Endothelial cell of umbilical vein (primary cell): ENCODE measurements at regions of chr3 and their contacts with region 1.

Region 1: DNA sequence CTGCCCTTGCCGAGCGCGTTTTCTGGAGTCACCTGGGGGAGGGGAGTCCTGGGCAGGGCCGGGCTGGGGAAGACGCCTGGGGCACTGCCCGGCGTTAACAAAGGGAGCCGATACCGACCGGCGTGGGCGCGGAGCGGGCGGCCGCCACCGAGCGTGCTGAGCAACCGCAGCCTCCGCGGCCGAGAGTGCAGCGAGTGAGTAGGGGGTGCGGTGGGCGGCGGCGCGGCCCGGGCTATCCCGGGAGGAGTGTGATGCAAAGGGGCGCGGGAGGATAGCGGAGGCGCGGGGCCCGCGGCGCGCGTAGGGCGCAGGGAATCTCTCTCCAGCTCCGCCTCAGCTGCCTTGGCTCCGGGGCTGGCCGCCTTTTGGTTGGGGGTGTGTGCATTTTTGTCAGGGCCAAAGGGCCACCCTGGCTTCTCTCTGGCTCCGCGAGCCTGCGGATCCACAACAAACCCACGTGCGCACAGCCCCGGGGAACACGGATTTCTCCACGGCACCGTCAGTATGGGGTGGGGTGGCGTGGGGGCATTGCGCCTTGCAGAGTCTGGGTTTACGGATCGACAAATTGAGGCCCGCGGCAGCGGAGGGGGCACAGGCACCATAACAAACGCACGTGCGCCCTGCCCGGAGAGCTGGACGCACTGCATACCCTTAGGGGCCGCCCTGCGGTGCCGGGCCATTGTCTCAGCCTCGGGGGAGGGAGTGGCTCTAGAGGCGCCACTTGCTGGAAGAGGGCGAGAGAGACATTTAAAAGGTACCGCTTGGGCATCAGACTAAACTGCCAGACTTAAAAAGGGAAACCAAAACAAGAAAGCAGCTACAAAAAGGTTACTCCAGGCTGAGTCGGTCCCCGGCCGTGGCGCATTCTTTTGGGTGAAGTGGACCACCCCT is 560 bp downstream of the ST6GAL1 start:
- DNase-seq: peak; percentile 81
- H3K4me3 ChIP-seq: peak overlapping the region; percentile 66 to 96 (median 83)
- H3K27ac ChIP-seq: peak overlapping the region; percentile 53
- H3K4me1 ChIP-seq: peaks cover 26% of the 10 kb centered on the region
- H3K27me3 ChIP-seq: no peaks in the 10 kb centered on the region
- CTCF ChIP-seq: peak in 1 of 2 donors; percentile 20
- POLR2A ChIP-seq: no peak

Region 2: DNA sequence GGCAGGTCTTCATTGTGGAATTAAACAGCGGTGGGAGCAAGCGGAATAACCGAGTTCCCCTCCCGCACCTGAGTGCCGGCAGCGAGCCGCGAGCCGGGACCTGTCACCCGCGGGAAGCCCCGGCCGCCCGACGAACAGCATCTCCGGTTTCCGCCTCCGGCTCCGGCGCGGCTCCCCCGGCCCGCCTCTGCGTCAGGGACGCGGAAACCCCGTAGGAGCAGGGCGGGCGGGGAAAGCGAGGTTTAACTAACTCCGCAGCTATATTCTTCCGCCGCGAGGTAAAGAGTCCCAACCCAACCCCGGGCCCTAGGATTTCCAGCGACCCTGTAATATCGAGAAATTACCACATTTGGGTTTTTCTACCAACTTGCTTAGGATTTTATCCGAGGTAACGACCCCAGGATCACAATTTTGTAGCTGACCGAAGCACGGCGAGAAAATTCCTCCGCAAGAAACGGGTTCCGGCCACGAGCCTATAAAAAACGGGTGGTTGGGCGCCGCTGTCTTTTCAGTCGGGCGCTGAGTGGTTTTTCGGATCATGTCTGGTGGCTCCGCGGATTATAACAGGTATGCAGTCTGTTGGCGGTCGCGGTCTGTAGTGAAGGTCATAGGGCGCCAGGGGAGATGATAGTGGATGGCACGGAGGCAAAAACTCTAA is 147.7 kb before region 1 on chr3 and contains the start of gene EIF4A2:
- CTCF ChIA-PET with region 1: no interaction called
- POLR2A ChIA-PET with region 1: interaction called, 6 read pairs
- dilution Hi-C with region 1: no loop called
- intact Hi-C with region 1: loop called (anchors 5 kb)
- DNase-seq: peak; percentile 86
- H3K4me3 ChIP-seq: peak within 1 kb of the TSS; percentile 38 to 85 (median 72)
- H3K27ac ChIP-seq: peak within 1 kb of the TSS; percentile 93
- H3K4me1 ChIP-seq: peaks cover 26% of the 10 kb centered on the region
- H3K27me3 ChIP-seq: no peaks in the 10 kb centered on the region
- CTCF ChIP-seq: no peak
- POLR2A ChIP-seq: peak; percentile 99
- total RNA-seq, gene EIF4A2: 260 and 282 TPM in 2 replicates

Region 3: DNA sequence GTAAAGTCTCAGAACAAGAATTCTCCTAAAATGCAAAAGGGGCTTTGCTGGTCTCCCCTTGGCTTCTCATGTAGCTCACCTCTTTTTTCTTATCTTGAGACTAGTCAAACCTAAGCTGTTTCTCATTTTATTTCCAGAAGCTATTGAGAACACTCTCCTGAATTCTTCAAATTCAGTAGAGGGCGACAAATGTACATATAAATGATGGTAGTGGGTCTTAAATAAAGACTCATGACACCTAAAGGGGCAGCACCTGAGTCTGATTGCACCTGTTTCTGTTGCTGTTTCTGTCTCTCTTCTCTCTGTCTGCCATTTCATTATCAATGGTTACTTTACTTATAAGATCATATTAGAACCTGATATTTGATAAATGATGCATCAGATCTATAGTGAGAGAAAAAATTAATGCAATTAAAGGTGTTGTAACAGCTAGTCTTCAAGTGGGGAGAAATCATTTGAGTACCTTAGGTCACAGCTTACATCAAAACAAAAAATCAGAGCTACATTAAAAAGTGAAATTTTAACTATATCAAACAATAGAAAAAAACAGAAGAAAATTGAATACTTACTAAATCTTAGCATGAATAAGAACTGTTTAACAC is 81.4 kb before region 1 on chr3:
- CTCF ChIA-PET with region 1: interaction called, 102 read pairs
- POLR2A ChIA-PET with region 1: interaction called, 5 read pairs
- dilution Hi-C with region 1: no loop called
- intact Hi-C with region 1: loop called (anchors 1 kb)
- DNase-seq: peak; percentile 74
- H3K4me3 ChIP-seq: no peak overlapping the region
- H3K27ac ChIP-seq: no peak overlapping the region
- H3K4me1 ChIP-seq: no peaks in the 10 kb centered on the region
- H3K27me3 ChIP-seq: no peaks in the 10 kb centered on the region
- CTCF ChIP-seq: peak; percentile 3 to 20
- POLR2A ChIP-seq: no peak

Region 4: GRCh38 chr3:186953011-186953487 is 22.2 kb after region 1 on chr3:
- CTCF ChIA-PET with region 1: interaction called, 8 read pairs
- POLR2A ChIA-PET with region 1: no interaction called
- dilution Hi-C with region 1: no loop called
- intact Hi-C with region 1: loop called (anchors 1 kb)
- DNase-seq: peak; percentile 79
- H3K4me3 ChIP-seq: no peak overlapping the region
- H3K27ac ChIP-seq: peak overlapping the region; percentile 26
- H3K4me1 ChIP-seq: peaks cover 18% of the 10 kb centered on the region
- H3K27me3 ChIP-seq: no peaks in the 10 kb centered on the region
- CTCF ChIP-seq: no peak
- POLR2A ChIP-seq: no peak

Region 5: DNA sequence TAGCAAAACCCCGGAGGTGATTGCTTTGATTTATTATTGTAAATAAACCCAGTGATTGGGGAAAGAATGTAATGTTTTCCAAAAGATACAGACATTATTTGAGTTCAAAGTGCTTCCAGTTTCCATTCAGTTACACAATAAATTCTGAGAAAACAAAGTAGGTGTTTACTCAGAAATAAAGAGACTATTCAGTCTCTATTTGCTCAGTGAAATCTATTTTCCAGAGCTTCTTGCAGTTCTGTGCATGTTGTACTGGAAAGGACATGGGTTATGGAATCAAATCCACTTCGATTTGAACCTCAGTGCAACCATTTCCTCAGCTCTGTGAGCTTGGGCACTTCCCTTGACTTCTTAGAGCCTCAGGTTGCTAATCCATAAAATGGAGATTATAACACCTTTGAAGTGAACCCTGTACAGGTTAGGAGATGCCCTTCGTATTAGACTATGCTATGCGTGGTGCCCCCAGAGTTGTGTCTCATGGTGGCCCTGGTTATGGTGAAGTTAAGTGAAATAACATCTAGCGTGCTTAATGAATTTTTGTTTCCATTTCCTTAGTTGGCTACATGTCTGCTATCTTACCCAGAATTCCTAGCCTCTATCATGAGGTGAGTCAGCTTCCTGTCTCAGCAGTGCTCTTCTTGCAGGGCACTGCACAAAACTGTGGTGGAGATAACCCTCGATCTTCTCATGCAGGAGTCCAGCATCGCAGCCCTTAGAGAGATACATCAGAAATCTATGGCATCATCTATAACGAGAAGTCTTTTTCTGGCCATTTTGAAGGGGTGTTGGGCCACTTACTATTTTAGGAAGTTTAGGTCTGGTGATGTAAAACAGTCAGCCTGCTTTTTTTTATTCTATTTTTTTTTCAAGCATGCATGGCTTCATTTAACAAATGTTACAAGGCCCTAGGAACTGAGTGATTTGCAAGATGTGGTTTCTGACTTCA is 110.7 kb after region 1 on chr3:
- CTCF ChIA-PET with region 1: interaction called, 4 read pairs
- POLR2A ChIA-PET with region 1: no interaction called
- dilution Hi-C with region 1: no loop called
- intact Hi-C with region 1: loop called (anchors 1 kb)
- DNase-seq: peak; percentile 84
- H3K4me3 ChIP-seq: no peak overlapping the region
- H3K27ac ChIP-seq: peak overlapping the region; percentile 64
- H3K4me1 ChIP-seq: peaks cover 41% of the 10 kb centered on the region
- H3K27me3 ChIP-seq: no peaks in the 10 kb centered on the region
- CTCF ChIP-seq: no peak
- POLR2A ChIP-seq: no peak

Region 6: GRCh38 chr3:187101184-187102072 is 170.5 kb after region 1 on chr3:
- CTCF ChIA-PET with region 1: interaction called, 3 read pairs
- POLR2A ChIA-PET with region 1: no interaction called
- dilution Hi-C with region 1: no loop called
- intact Hi-C with region 1: loop called (anchors 5 kb)
- DNase-seq: peak; percentile 90
- H3K4me3 ChIP-seq: peak overlapping the region; percentile 36 to 81 (median 71)
- H3K27ac ChIP-seq: peak overlapping the region; percentile 62
- H3K4me1 ChIP-seq: peaks cover 13% of the 10 kb centered on the region
- H3K27me3 ChIP-seq: no peaks in the 10 kb centered on the region
- CTCF ChIP-seq: no peak
- POLR2A ChIP-seq: no peak

Region 7: GRCh38 chr3:187164885-187165543 is 234.1 kb after region 1 on chr3:
- CTCF ChIA-PET with region 1: interaction called, 6 read pairs
- POLR2A ChIA-PET with region 1: no interaction called
- dilution Hi-C with region 1: no loop called
- intact Hi-C with region 1: loop called (anchors 1 kb)
- DNase-seq: peak; percentile 62
- H3K4me3 ChIP-seq: no peak overlapping the region
- H3K27ac ChIP-seq: no peak overlapping the region
- H3K4me1 ChIP-seq: no peaks in the 10 kb centered on the region
- H3K27me3 ChIP-seq: peaks cover 17 to 28% of the 10 kb centered on the region in 2 experiments
- CTCF ChIP-seq: peak; percentile 54 to 61
- POLR2A ChIP-seq: no peak

Region 8: DNA sequence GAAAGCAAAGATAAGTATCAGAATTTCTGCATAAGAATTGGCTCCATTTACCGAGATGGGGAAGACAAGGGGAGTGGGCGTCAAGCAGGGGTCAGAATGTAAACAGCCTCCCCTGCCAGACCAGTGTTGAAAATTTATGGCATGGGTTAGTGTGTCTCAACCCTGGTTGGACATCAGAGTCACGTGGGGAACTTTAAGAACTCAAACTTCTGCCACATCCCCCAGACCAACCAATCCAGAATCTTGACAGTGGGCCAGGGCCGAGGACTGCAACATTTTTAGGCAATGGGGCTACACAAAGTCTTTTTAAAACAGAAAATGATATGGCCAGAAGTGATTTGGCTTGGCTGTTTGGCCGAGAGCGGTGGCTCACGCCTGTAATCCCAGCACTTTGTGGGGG is 375.0 kb after region 1 on chr3:
- CTCF ChIA-PET with region 1: no interaction called
- POLR2A ChIA-PET with region 1: no interaction called
- dilution Hi-C with region 1: no loop called
- intact Hi-C with region 1: no loop called
- DNase-seq: no peak
- H3K4me3 ChIP-seq: no peak overlapping the region
- H3K27ac ChIP-seq: no peak overlapping the region
- H3K4me1 ChIP-seq: no peaks in the 10 kb centered on the region
- H3K27me3 ChIP-seq: peaks cover 0 to 2% of the 10 kb centered on the region in 2 experiments
- CTCF ChIP-seq: no peak
- POLR2A ChIP-seq: no peak